HCT116 (cell line): ENCODE measurements at regions of chr3 and their contacts with region 1.

Region 1: GRCh38 chr3:156151824-156152428 is 31.5 kb downstream of the KCNAB1 start:
- DNase-seq: peak; percentile 60
- ATAC-seq: peak; percentile 94
- H3K4me3 ChIP-seq: no peak overlapping the region
- H3K27ac ChIP-seq: no peak overlapping the region
- H3K4me1 ChIP-seq: peaks cover 0 to 3% of the 10 kb centered on the region in 2 experiments; a peak in 1 of 4 replicates
- H3K27me3 ChIP-seq: no peaks in the 10 kb centered on the region
- CTCF ChIP-seq: peak; percentile 82 to 93 (median 87)
- POLR2A ChIP-seq: no peak
- RAD21 ChIP-seq: peak; percentile 94

Region 2: GRCh38 chr3:155995525-155996351 is 156.2 kb before region 1 on chr3:
- CTCF ChIA-PET with region 1: no interaction called
- POLR2A ChIA-PET with region 1: no interaction called
- RAD21 ChIA-PET with region 1: no interaction called
- intact Hi-C with region 1: loop called (anchors 5 kb)
- DNase-seq: peak; percentile 54
- ATAC-seq: peak; percentile 97
- H3K4me3 ChIP-seq: no peak overlapping the region
- H3K27ac ChIP-seq: no peak overlapping the region
- H3K4me1 ChIP-seq: peaks cover 0 to 5% of the 10 kb centered on the region in 2 experiments; a peak in 1 of 4 replicates
- H3K27me3 ChIP-seq: no peaks in the 10 kb centered on the region
- CTCF ChIP-seq: peak; percentile 56 to 70 (median 66)
- POLR2A ChIP-seq: no peak
- RAD21 ChIP-seq: peak; percentile 78

Region 3: DNA sequence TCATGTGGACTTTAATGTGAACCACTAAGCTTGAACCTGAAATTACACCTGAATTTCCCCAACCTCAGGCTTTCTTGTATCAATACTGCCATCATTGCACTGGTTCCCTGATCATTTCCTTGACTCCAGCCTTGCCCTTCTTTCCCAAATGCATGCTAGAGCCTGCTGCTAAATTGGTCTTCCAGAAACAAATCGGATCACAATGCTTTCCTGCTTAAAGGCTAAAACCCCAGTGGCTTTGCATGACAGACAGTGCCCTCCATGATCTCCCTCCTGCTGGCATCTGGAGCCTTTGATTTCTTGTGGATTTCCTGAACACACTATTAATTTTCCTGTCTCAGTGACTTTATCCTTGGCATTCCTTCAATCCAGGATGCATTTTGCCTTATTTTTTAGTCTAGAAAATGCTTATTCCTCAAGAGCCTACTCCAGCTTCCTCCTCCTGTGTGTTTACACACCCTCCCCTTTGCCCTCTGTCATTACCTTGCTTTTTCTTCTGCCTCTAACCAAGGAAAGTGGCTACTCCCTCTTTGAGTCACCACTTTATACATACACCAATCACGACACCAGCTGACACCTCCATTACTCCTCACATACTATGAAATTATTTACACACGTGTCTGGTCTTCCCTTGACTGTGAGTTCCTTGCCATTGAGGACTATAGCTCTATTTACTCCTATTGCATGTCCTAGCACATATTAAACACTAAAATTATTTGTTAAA is 183.1 kb after region 1 on chr3:
- CTCF ChIA-PET with region 1: no interaction called
- POLR2A ChIA-PET with region 1: no interaction called
- RAD21 ChIA-PET with region 1: no interaction called
- intact Hi-C with region 1: no loop called
- DNase-seq: no peak
- ATAC-seq: no peak
- H3K4me3 ChIP-seq: no peak overlapping the region
- H3K27ac ChIP-seq: no peak overlapping the region
- H3K4me1 ChIP-seq: peaks cover 0 to 5% of the 10 kb centered on the region in 2 experiments; a peak in 1 of 4 replicates
- H3K27me3 ChIP-seq: no peaks in the 10 kb centered on the region
- CTCF ChIP-seq: no peak
- POLR2A ChIP-seq: no peak
- RAD21 ChIP-seq: no peak

Region 4: GRCh38 chr3:156382458-156383346 is 230.8 kb after region 1 on chr3:
- CTCF ChIA-PET with region 1: interaction called, 37 read pairs
- POLR2A ChIA-PET with region 1: no interaction called
- RAD21 ChIA-PET with region 1: interaction called, 10 to 16 read pairs
- intact Hi-C with region 1: loop called (anchors 1 kb)
- DNase-seq: peak; percentile 23
- ATAC-seq: peak; percentile 94
- H3K4me3 ChIP-seq: no peak overlapping the region
- H3K27ac ChIP-seq: no peak overlapping the region
- H3K4me1 ChIP-seq: no peaks in the 10 kb centered on the region
- H3K27me3 ChIP-seq: 0 out of 2 replicates have a peak, but pooled peaks cover 2% of the 10 kb centered on the region
- CTCF ChIP-seq: peak; percentile 62 to 87 (median 81); a peak in 5 of 6 replicates
- POLR2A ChIP-seq: no peak
- RAD21 ChIP-seq: peak; percentile 81

Region 5: DNA sequence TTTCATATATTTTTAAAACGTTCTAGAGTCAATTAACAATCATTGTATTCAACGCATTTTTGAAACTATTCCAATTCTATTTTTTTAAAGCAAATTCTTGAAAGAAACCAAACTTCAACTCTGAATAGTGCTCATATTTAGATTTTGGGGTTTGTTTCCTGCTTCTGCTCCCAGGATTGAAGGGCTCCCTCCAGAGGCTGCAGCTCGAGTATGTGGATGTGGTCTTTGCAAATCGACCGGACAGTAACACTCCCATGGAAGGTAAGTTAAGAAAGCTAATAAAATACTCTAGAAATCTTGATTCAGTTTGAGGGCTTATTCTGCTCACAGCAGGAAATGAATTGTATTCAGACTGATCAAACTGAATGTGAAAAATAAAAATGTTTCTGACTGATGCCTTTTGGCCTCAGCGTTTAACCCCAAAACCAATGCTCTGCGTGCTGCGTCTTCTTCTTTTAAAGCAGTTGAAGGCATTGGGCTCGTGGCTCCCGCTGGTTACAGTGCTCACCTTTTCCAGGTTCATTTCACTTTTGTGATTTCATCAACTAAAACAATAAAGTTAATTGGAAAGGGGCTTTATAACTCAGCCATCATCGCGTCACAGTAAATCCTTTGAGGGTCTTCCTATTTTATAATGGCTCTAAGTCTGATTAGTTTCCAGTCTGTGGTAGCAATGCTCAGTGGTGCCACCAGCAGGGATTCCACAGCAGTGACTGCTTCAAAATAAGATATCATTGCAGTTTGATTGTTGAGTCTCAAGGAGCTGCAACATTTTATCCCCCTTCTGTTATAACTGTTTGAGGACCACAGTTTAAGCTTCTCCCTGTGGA is 322.8 kb after region 1 on chr3:
- CTCF ChIA-PET with region 1: interaction called, 11 read pairs
- POLR2A ChIA-PET with region 1: no interaction called
- RAD21 ChIA-PET with region 1: no interaction called
- intact Hi-C with region 1: no loop called
- DNase-seq: no peak
- ATAC-seq: peak; percentile 83
- H3K4me3 ChIP-seq: no peak overlapping the region
- H3K27ac ChIP-seq: no peak overlapping the region
- H3K4me1 ChIP-seq: no peaks in the 10 kb centered on the region
- H3K27me3 ChIP-seq: no peaks in the 10 kb centered on the region
- CTCF ChIP-seq: peak in 2 of 3 experiments; percentile 53 to 70; a peak in 4 of 6 replicates
- POLR2A ChIP-seq: no peak
- RAD21 ChIP-seq: peak; percentile 28; the same call in 1 of the 2 replicates

Region 6: GRCh38 chr3:156536524-156537231 is 384.8 kb after region 1 on chr3:
- CTCF ChIA-PET with region 1: interaction called, 3 read pairs
- POLR2A ChIA-PET with region 1: no interaction called
- RAD21 ChIA-PET with region 1: no interaction called
- intact Hi-C with region 1: loop called (anchors 1 kb)
- DNase-seq: no peak
- ATAC-seq: no peak
- H3K4me3 ChIP-seq: no peak overlapping the region
- H3K27ac ChIP-seq: no peak overlapping the region
- H3K4me1 ChIP-seq: peaks cover 4 to 15% of the 10 kb centered on the region in 2 experiments; a peak in 2 of 4 replicates
- H3K27me3 ChIP-seq: no peaks in the 10 kb centered on the region
- CTCF ChIP-seq: no peak
- POLR2A ChIP-seq: no peak
- RAD21 ChIP-seq: no peak

Region 7: GRCh38 chr3:157081681-157082210 is 929.8 kb after region 1 on chr3:
- CTCF ChIA-PET with region 1: interaction called, 3 read pairs
- POLR2A ChIA-PET with region 1: no interaction called
- RAD21 ChIA-PET with region 1: no interaction called
- intact Hi-C with region 1: loop called (anchors 1 kb)
- DNase-seq: peak; percentile 85
- ATAC-seq: peak; percentile 92
- H3K4me3 ChIP-seq: peak overlapping the region; percentile 3 to 22; a peak in 2 of 4 replicates
- H3K27ac ChIP-seq: no peak overlapping the region
- H3K4me1 ChIP-seq: peaks cover 5 to 45% of the 10 kb centered on the region in 2 experiments
- H3K27me3 ChIP-seq: no peaks in the 10 kb centered on the region
- CTCF ChIP-seq: peak in 2 of 3 experiments; percentile 94 to 99; a peak in 4 of 6 replicates
- POLR2A ChIP-seq: no peak
- RAD21 ChIP-seq: no peak

Region 8: DNA sequence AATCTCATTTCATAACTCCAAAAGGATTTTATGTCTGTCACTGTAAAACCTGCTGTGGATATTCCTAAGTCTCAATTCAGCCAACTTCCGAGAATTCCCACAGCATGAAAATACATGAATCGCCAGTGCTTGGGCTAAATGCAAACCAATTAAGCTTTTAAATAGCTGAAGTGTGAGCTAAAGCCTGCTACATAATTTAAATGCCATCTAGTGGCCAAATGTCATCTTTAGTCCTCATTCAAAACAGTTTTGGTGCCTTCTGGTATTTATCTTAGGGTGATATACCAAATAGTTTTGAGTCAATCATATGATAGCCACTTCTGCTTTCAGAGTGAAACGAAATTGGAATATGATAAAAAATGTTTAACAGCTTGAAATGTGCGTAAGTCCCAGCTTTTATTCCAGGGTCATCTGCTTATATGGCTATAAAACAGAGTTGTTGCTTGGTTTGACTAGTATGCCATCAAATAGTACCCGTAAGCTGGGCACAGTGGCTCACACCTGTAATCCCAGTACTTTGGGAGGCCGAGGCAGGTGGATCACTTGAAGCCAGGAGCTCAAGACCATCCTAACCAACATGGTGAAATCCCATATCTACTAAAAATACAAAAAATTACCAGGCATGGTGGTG is 1049.8 kb after region 1 on chr3:
- CTCF ChIA-PET with region 1: interaction called, 8 read pairs
- POLR2A ChIA-PET with region 1: no interaction called
- RAD21 ChIA-PET with region 1: interaction called in 1 of 2 experiments, 5 read pairs
- intact Hi-C with region 1: loop called (anchors 5 kb)
- DNase-seq: peak; percentile 19
- ATAC-seq: peak; percentile 73
- H3K4me3 ChIP-seq: no peak overlapping the region
- H3K27ac ChIP-seq: no peak overlapping the region
- H3K4me1 ChIP-seq: no peaks in the 10 kb centered on the region
- H3K27me3 ChIP-seq: no peaks in the 10 kb centered on the region
- CTCF ChIP-seq: peak; percentile 44 to 65 (median 64); a peak in 5 of 6 replicates
- POLR2A ChIP-seq: no peak
- RAD21 ChIP-seq: peak; percentile 65